Activated CD4-positive, alpha-beta memory T cell treated with anti-CD3 and anti-CD28 coated beads for 36 hours (primary cell): ENCODE measurements at regions of chr12 and their contacts with region 1.

Region 1: GRCh38 chr12:77133566-77133965 is 68.2 kb upstream of the E2F7 start:
- DNase-seq: peak; percentile 14
- H3K4me3 Mint-ChIP-seq: no peak overlapping the region
- H3K27ac Mint-ChIP-seq: no peak overlapping the region
- H3K4me1 Mint-ChIP-seq: no peaks in the 10 kb centered on the region
- H3K27me3 Mint-ChIP-seq: no peaks in the 10 kb centered on the region

Region 2: GRCh38 chr12:76738934-76739586 is 394.5 kb before region 1 on chr12:
- CTCF ChIA-PET with region 1: no interaction called
- POLR2A ChIA-PET with region 1: no interaction called
- intact Hi-C with region 1: no loop called
- DNase-seq: no peak
- H3K4me3 Mint-ChIP-seq: no peak overlapping the region
- H3K27ac Mint-ChIP-seq: no peak overlapping the region
- H3K4me1 Mint-ChIP-seq: no peaks in the 10 kb centered on the region
- H3K27me3 Mint-ChIP-seq: peaks cover 1% of the 10 kb centered on the region

Region 3: GRCh38 chr12:77102691-77103090 is 30.9 kb before region 1 on chr12:
- CTCF ChIA-PET with region 1: no interaction called
- POLR2A ChIA-PET with region 1: no interaction called
- intact Hi-C with region 1: no loop called
- DNase-seq: no peak
- H3K4me3 Mint-ChIP-seq: no peak overlapping the region
- H3K27ac Mint-ChIP-seq: no peak overlapping the region
- H3K4me1 Mint-ChIP-seq: no peaks in the 10 kb centered on the region
- H3K27me3 Mint-ChIP-seq: peaks cover 5% of the 10 kb centered on the region

Region 4: GRCh38 chr12:77113971-77114370 is 19.6 kb before region 1 on chr12:
- CTCF ChIA-PET with region 1: no interaction called
- POLR2A ChIA-PET with region 1: no interaction called
- intact Hi-C with region 1: loop called (anchors 1 kb)
- DNase-seq: no peak
- H3K4me3 Mint-ChIP-seq: no peak overlapping the region
- H3K27ac Mint-ChIP-seq: no peak overlapping the region
- H3K4me1 Mint-ChIP-seq: no peaks in the 10 kb centered on the region
- H3K27me3 Mint-ChIP-seq: no peaks in the 10 kb centered on the region